Activated CD4-positive, alpha-beta memory T cell treated with anti-CD3 and anti-CD28 coated beads, Interleukin-2, amount 10 ng/mL, durations not matched to agents 7 days and 5 days (primary cell): ENCODE measurements at regions of chr15 and their contacts with region 1.

Region 1: DNA sequence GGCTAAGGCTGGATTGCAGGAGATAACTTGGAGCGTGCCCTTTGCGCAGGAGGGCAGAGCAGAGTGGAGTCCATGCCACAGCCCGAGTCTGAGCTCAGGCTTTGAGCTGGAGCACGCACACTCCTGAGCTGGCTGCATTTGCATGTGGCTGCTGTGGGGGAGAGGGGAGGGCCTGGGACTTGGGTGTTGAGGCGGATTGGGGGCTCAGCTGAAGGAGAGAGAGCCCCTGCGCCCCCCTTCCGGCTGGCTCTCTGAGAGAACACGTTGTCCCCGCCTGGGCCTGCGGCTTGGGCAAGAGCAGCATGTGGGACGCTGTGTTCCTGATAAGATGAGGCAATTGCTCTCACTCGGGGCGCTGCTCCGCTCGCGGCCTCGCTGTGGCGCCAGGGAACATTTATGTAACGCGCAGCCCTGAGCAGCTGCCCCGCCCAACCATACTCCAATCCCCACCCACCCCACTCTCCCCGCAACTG is 39.1 kb downstream of the KLF13 start:
- DNase-seq: peak; percentile 86
- H3K4me3 Mint-ChIP-seq: peak overlapping the region; percentile 64
- H3K27ac Mint-ChIP-seq: peak overlapping the region; percentile 99
- H3K4me1 Mint-ChIP-seq: peaks cover 99% of the 10 kb centered on the region
- H3K27me3 Mint-ChIP-seq: no peaks in the 10 kb centered on the region

Region 2: DNA sequence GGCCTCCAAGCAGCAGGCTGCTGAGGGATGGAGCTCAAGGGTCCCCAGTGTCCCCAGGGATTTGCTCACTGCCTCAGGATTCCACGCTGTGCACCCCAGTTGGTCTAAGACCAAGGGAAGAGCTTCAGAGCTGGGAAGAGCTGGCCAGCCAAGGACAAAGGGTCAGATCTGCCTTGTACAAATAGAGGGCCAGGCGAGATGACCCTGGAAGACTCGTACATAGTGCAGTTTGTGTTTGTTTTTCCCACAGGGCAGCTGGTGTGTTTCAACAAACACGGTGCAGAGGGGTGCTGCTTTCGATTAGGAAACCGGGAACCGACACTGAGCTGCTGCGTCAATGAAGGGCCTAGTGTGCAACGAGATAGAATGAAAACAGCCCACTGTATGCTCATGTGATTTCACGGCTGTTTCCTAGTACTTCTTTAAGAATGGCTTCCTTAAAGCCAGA is 208.0 kb before region 1 on chr15:
- CTCF ChIA-PET with region 1: no interaction called
- POLR2A ChIA-PET with region 1: no interaction called
- DNase-seq: no peak
- H3K4me3 Mint-ChIP-seq: no peak overlapping the region
- H3K27ac Mint-ChIP-seq: no peak overlapping the region
- H3K4me1 Mint-ChIP-seq: peaks cover 8% of the 10 kb centered on the region
- H3K27me3 Mint-ChIP-seq: no peaks in the 10 kb centered on the region

Region 3: DNA sequence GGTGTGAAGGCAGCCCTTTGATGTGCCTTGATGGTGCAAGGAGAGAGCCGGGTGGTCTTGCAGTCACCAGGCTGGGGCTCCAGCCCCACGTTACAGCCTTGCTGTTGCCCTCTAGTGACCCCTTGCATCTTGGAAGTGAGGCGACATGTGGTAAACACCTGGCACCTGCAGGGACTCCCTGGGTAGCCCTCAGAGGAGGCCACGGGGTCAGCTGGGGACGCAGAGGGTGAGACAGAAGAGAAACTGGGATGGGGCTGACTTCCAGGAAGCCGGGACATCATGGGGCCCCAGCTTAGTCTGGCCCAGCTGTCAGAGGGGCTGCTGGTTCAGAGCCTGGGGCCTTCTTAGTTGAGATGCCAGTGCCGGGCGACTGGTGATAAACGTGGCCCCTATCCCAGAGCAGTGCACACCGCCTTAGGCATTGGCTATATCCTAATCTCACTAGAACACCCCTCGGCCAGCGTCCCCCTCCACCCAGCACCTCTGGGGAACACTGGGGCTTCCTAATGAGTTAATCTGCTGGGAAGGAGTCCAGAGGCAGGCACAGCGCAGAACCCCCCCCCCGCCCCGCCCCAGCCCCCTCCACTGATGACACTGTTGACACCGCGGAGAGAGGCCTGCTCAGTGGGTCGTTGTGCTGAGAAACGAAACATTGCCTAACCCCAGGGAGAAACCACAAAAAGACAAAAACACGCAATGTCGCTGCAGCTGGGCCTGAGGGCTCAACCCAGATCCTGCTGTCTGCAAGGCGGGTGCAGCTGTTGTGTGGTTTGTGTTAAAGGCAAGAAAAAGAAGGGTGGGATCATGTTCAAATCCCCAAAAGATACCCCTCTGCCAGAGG is 99.6 kb before region 1 on chr15:
- CTCF ChIA-PET with region 1: interaction called, 4 read pairs
- POLR2A ChIA-PET with region 1: interaction called, 10 read pairs
- DNase-seq: peak; percentile 82
- H3K4me3 Mint-ChIP-seq: peak overlapping the region; percentile 22
- H3K27ac Mint-ChIP-seq: peak overlapping the region; percentile 89
- H3K4me1 Mint-ChIP-seq: peaks cover 84% of the 10 kb centered on the region
- H3K27me3 Mint-ChIP-seq: peaks cover 8% of the 10 kb centered on the region

Region 4: DNA sequence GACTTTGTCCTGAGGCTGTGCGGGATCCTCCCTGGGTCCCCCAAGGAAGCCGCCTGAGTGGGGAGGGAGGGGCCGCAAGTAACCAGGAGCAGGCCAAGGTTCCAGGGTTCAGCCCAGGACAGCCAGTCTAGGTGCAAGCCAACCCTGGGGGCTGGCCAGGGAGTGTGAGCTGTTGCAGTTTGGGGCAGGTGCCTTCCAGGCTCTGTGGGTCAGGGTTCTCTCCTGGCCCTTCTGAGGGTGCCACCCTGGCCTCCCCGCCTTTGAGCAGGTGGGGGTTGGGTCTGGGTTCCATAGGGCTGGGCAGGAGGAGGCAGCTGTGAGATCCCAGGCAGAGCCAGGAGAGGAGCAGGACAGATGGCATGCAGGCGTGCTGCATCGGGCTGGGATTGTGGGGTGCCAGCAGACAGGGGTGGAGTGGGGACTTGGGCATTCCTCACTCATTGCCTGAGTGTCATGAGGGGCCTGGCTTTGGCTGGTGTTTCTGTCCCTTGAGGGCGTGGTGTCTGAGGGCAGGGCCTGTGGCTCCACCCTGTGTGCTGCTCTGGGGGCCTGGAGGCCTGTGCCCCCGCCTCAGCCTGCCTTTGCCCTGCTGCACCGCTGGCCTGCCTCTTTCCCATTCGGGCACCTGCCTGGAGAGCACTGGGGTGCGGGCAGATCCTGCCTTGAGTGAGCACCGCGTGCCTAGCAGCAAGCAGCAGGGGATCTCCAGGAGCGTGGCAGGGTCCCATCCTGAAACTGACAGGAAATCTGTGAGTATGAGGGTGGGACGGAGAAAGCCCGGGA is 20.7 kb before region 1 on chr15:
- CTCF ChIA-PET with region 1: interaction called, 12 read pairs
- POLR2A ChIA-PET with region 1: interaction called, 374 read pairs
- DNase-seq: no peak
- H3K4me3 Mint-ChIP-seq: peak overlapping the region; percentile 89
- H3K27ac Mint-ChIP-seq: peak overlapping the region; percentile 97
- H3K4me1 Mint-ChIP-seq: peaks cover 100% of the 10 kb centered on the region
- H3K27me3 Mint-ChIP-seq: no peaks in the 10 kb centered on the region

Region 5: DNA sequence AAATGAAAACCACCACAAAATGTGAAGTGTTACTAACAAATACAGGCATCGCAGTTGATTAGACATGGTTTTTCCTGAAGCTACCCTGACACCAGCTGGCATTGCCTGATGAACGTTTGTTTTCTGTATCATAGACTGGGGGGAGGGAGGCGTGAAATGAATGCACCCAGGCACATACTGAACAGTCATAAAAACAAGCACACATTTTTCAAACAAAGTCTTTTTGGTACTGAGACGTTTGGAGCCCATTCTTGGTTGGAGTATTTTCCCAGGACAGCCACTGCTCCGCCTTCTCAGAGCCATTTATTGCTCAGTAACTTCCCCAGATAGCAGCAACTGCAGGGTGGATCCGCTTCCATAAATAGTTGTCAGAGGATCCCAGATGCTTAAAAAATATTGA is 13.4 kb after region 1 on chr15:
- CTCF ChIA-PET with region 1: interaction called, 4 read pairs
- POLR2A ChIA-PET with region 1: interaction called, 12 read pairs
- DNase-seq: no peak
- H3K4me3 Mint-ChIP-seq: no peak overlapping the region
- H3K27ac Mint-ChIP-seq: no peak overlapping the region
- H3K4me1 Mint-ChIP-seq: peaks cover 16% of the 10 kb centered on the region
- H3K27me3 Mint-ChIP-seq: no peaks in the 10 kb centered on the region

Region 6: DNA sequence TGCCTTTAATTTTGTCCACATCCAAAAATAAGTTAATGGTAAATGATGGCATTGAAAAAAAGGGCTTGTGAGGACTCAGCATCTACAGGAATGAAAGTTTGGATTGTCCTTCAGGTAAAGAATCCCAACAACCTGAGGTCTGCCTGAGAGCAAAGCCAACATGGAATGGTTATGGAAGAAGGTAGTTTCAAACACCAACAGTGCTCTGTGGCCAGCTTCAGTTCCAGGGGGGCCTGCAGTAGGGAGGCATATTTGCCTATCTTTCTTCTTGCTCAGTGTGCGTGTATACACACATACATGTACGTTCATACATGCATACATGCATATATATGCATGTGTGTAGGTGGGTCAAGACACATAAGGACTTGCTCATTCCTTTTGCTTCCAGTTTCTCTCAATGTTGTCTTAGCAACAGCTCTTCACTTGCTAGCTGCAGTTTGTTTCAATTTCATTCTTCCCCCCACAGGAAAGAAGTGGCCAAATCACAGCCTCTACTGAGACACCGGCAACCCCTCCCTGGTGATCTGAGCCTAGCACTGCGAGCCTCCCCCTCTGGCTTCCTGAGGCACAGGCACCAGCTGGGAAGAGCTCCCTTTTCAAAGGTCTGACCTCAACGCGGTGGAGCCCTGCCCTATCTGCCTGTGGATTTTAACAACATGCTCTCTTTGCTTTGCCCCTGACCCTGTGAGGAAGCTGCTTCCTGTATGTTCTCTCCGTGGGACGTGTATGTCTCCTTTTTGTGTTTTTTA is 107.1 kb after region 1 on chr15:
- CTCF ChIA-PET with region 1: interaction called, 11 read pairs
- POLR2A ChIA-PET with region 1: interaction called, 12 read pairs
- DNase-seq: peak; percentile 69
- H3K4me3 Mint-ChIP-seq: peak overlapping the region; percentile 65
- H3K27ac Mint-ChIP-seq: peak overlapping the region; percentile 80
- H3K4me1 Mint-ChIP-seq: peaks cover 35% of the 10 kb centered on the region
- H3K27me3 Mint-ChIP-seq: no peaks in the 10 kb centered on the region

Region 7: GRCh38 chr15:31488426-31489204 is 122.9 kb after region 1 on chr15:
- CTCF ChIA-PET with region 1: interaction called, 128 read pairs
- POLR2A ChIA-PET with region 1: interaction called, 29 read pairs
- DNase-seq: peak; percentile 49
- H3K4me3 Mint-ChIP-seq: no peak overlapping the region
- H3K27ac Mint-ChIP-seq: peak overlapping the region; percentile 21
- H3K4me1 Mint-ChIP-seq: peaks cover 63% of the 10 kb centered on the region
- H3K27me3 Mint-ChIP-seq: peaks cover 7% of the 10 kb centered on the region

Region 8: DNA sequence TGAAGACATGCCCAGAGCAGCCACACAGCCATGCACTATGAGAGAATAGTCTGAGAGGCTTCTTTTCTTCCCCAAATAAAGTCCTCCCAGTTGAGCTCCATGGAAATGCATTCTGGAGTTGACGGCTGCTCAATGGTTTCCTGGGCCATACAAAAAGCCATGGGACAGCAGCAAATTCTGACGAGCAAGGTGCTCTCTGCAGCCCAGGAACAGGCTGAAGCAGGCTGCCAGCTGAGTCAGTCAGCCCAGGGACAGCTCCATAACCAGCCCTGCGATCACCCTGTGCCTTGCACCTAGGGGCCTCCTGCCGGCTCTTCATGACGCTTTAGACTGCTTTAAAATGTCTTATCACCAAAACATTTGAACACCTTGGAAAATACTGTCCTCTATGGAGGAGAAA is 408.4 kb after region 1 on chr15:
- CTCF ChIA-PET with region 1: no interaction called
- POLR2A ChIA-PET with region 1: no interaction called
- DNase-seq: no peak
- H3K4me3 Mint-ChIP-seq: no peak overlapping the region
- H3K27ac Mint-ChIP-seq: no peak overlapping the region
- H3K4me1 Mint-ChIP-seq: no peaks in the 10 kb centered on the region
- H3K27me3 Mint-ChIP-seq: no peaks in the 10 kb centered on the region